Dorsolateral prefrontal cortex (tissue), 120 donors: ENCODE measurements at regions of chr9 and their contacts with region 1.

Region 1: DNA sequence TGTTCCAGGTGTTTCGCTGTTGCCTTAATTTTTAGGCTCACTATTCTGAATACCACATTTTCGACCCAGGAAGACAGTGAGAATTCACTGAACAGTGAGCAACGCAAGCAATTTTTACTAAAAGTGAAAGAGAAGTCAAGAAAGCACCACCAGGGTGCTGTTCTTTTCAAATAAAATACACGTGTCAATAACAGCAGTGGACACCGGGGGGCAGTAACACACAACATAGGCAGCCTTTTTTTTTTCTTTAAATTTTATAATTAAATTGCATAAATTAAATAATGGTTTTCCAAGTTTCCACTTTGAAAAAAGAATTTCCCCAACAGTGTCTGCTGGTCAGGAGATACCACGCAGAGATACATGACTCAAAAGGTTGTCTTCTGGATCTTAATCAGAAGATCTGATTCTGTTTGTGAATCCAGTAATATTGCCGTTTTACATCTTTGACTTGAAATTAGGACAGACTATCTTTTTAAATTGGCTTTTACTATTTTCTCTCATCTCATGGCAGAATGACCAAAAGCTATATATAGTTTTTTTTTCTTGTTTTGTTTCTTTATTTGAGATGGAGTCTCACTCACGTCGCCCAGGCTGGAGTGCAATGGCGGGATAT is 47.1 kb upstream of the SH3GL2 start:
- DNase-seq: peak in 4 of 10 donors; percentile 11 to 74 (median 40)
- H3K4me3 ChIP-seq: peak overlapping the region in 38 of 59 donors; percentile 1 to 56 (median 33)
- H3K27ac ChIP-seq: no peak overlapping the region
- H3K27me3 ChIP-seq: peaks cover 0 to 3% (median 0%) of the 10 kb centered on the region in 45 donors
- CTCF ChIP-seq: peak; percentile 58 to 83 (median 74)

Region 2: GRCh38 chr9:17487467-17487866 is 44.3 kb before region 1 on chr9:
- intact Hi-C with region 1: no loop called
- DNase-seq: no peak
- H3K4me3 ChIP-seq: no peak overlapping the region
- H3K27ac ChIP-seq: no peak overlapping the region
- H3K27me3 ChIP-seq: no peaks in the 10 kb centered on the region
- CTCF ChIP-seq: no peak

Region 3: DNA sequence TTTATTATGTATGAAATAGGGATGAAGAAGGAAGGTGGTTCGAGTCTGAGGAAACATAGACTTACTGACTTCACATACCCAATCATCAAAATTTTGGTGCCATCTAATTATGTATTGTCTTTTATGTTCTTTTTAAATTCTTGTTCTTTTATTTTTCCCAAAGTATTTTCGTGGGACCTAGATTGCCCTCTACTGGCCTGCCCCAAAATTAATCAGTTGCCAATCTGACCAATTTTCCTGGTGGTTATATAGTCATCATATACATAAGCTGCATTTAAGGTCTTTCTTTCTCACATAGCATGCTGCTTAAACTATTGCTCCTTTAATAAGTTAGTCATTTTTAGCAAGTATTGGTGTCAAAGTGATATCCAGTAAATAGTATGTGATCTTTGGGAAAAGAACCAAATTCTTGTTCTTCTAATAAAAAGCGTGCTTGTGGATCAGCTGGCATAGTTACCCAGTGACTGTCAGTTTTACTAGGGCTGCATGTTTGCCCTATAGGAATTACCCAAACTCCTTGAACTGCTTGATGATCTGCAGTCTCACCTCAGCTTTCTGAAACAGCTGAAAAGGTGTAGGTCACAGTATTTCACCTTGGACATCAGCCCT is 270.6 kb after region 1 on chr9:
- intact Hi-C with region 1: loop called (anchors 2 to 5 kb)
- DNase-seq: no peak
- H3K4me3 ChIP-seq: no peak overlapping the region
- H3K27ac ChIP-seq: no peak overlapping the region
- H3K27me3 ChIP-seq: peaks cover 0 to 3% (median 0%) of the 10 kb centered on the region in 45 donors
- CTCF ChIP-seq: peak; percentile 23 to 69 (median 52)

Region 4: DNA sequence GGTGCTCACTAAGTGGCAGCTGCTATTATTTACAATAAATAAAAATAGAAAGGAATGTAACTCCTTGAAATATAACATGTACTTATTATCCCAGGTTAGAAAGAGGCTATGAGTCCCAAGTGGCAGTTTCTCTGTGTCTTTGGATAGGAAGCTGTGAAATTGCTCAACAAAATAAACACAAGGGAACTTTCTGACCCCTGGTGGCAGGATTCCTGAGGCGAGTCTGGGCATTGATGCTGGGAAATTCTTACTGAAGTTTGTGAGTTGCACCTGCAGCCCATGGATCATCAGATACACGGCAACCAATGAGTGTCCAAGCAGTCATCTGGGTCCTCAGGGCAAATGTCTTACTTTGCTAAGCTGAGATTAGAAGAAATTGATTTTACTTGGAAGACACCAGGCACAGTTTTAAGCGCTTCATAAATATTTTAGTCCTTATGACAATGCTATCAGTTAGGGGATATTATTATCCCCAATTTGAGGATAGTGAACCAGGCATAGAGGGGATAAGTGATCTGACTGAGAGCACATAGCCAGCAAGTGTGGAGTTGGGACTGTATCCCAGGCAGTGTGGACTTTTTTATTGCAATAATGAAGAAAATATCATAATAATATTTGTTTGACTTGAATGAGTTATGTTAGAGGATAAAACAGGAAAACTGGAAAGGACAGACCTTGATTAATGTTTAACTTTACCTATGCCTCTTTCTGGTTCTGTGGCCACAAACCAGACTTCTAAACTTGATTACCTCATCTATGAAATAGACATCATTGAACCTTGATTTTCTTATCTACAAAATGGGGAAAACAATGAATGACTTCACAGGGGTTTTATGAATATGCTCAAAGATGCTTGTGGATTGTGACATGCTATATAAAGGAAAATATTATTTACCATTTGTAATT is 676.7 kb after region 1 on chr9:
- intact Hi-C with region 1: loop called (anchors 2 to 5 kb)
- DNase-seq: peak in 1 of 10 donors; percentile 13
- H3K4me3 ChIP-seq: no peak overlapping the region
- H3K27ac ChIP-seq: no peak overlapping the region
- H3K27me3 ChIP-seq: peaks cover 0 to 18% (median 0%) of the 10 kb centered on the region in 45 donors
- CTCF ChIP-seq: peak in 47 of 56 donors; percentile 13 to 53 (median 32)

Region 5: DNA sequence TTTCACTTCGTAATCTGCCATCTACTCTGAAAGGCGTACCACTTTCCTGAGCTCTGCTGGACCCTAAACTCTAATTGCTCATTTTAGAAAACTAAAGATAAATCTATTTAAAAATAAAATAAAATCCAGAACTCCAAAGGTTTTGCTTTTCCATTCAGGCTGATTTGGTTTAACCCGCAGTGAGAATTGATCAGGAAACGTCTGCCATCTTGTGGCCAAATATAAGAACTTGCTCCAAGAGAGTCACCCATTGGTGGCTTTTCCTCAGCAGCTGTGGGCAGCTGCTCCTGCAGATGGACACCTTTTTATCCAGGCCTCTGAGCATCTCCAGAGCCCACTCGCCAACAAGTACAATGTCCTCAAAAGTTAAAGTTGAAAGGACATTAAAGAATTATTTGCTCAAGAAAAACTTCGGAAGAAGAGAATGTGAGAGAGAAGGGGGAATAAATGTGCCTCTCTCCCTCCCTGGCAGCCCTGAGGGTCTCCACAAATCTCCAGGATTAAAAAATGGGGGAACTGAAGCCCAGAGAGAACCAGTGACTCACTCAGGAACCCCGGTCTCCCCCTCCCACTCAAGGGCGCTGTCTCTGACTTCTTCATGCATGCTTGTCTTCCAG is 1497.2 kb after region 1 on chr9:
- intact Hi-C with region 1: loop called in 1 of 2 experiments (anchors 10 kb)
- DNase-seq: peak in 2 of 10 donors; percentile 31 to 39
- H3K4me3 ChIP-seq: peak overlapping the region in 5 of 59 donors; percentile 4 to 52 (median 15)
- H3K27ac ChIP-seq: no peak overlapping the region
- H3K27me3 ChIP-seq: peaks cover 0 to 9% (median 0%) of the 10 kb centered on the region in 45 donors
- CTCF ChIP-seq: peak; percentile 71 to 93 (median 85)